ENCODE measurements at regions of chr1 and their contacts with region 1.

Region 1: DNA sequence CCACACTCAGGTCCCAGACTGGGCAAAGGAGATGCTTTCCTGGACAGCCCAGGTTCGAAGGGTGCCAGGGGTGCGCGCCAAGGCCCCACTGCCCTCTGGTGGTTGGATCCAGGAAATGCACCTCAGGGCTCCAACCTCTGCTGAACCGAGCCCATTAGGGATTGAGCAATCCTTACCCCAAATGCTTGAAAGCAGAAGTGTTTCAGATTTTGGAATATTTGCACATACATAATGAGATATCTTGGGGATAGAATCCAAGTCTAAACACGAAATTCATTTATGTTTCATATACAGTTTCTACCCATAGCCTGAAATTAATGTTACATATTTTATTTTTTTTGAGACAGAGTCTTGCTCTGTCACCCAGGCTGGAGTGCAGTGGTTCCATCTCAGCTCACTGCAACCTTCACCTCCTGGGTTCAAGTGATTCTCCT is 57.4 kb downstream of the SLC9A1 start:
- DNase-seq: peak; percentile 86
- H3K4me3 Mint-ChIP-seq: no peak overlapping the region
- H3K27ac Mint-ChIP-seq: peak overlapping the region; percentile 43
- H3K4me1 Mint-ChIP-seq: peaks cover 24% of the 10 kb centered on the region
- H3K27me3 Mint-ChIP-seq: no peaks in the 10 kb centered on the region
- CTCF ChIP-seq: peak; percentile 94

Region 2: GRCh38 chr1:26602378-26602959 is 495.0 kb before region 1 on chr1:
- CTCF ChIA-PET with region 1: no interaction called
- POLR2A ChIA-PET with region 1: no interaction called
- intact Hi-C with region 1: no loop called
- DNase-seq: peak; percentile 77
- H3K4me3 Mint-ChIP-seq: no peak overlapping the region
- H3K27ac Mint-ChIP-seq: no peak overlapping the region
- H3K4me1 Mint-ChIP-seq: no peaks in the 10 kb centered on the region
- H3K27me3 Mint-ChIP-seq: peaks cover 28% of the 10 kb centered on the region
- CTCF ChIP-seq: peak; percentile 77

Region 3: DNA sequence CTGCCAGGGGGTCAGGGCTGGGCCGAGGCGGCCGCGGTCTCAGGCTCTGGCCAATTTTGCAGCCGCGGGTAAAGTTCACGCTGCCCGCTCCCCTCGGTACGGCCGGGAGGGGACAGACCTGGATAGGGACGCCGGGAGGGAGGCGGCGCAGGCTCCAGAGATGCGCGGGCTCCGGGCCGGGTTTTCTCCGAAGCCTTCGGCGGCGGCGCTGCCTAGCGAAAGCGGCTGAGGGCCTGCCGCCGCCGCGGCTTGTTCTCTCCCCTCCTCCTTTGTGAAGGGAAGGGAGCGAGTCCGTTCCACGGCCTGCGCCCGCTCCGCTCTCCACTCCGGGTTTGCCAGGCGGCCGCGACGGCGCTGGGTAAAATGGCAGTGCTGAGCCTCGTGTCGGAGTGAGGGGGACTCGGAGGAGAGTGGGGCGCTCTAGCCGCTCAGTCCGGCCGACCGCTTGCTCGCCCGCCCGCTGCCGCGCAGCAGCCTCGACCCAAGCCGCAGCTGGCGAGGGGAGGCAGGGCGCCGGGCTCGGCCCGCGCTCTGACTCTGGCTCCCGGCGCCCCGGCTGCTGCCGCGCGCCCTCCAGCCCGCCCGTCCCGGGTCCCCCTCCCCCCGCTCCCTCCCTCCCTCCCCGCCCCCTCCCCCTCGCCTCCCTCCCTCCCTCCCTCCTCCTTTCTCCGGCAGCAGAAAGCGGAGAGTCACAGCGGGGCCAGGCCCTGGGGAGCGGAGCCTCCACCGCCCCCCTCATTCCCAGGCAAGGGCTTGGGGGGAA is 402.0 kb before region 1 on chr1 and contains the start of gene ARID1A:
- CTCF ChIA-PET with region 1: no interaction called
- POLR2A ChIA-PET with region 1: no interaction called
- intact Hi-C with region 1: no loop called
- DNase-seq: peak; percentile 96
- H3K4me3 Mint-ChIP-seq: no peak within 1 kb of the TSS
- H3K27ac Mint-ChIP-seq: peak within 1 kb of the TSS; percentile 71
- H3K4me1 Mint-ChIP-seq: peaks cover 13% of the 10 kb centered on the region
- H3K27me3 Mint-ChIP-seq: no peaks in the 10 kb centered on the region
- CTCF ChIP-seq: no peak
- total RNA-seq, gene ARID1A: 54.2 and 56.9 TPM in 2 replicates

Region 4: DNA sequence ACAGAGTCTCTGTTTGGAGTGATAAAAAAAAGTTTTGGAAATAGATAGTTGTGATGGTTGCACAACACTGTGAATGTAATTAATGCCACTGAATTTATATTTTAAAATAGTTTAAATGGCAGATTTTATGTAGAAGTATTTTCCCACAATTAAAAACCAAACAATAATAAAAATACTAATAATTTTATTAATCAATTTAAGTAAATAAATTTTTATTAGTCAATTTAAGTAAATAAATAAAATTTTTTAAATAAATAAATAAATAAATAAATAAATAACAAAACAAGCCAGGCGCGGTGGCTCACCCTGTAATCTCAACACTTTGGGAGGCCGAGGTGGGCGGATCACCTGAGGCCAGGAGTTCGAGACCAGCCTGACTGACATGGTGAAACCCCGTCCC is 132.3 kb before region 1 on chr1:
- CTCF ChIA-PET with region 1: interaction called, 41 read pairs
- POLR2A ChIA-PET with region 1: interaction called, 4 read pairs
- intact Hi-C with region 1: loop called (anchors 1 kb)
- DNase-seq: no peak
- H3K4me3 Mint-ChIP-seq: no peak overlapping the region
- H3K27ac Mint-ChIP-seq: no peak overlapping the region
- H3K4me1 Mint-ChIP-seq: peaks cover 37% of the 10 kb centered on the region
- H3K27me3 Mint-ChIP-seq: no peaks in the 10 kb centered on the region
- CTCF ChIP-seq: no peak

Region 5: DNA sequence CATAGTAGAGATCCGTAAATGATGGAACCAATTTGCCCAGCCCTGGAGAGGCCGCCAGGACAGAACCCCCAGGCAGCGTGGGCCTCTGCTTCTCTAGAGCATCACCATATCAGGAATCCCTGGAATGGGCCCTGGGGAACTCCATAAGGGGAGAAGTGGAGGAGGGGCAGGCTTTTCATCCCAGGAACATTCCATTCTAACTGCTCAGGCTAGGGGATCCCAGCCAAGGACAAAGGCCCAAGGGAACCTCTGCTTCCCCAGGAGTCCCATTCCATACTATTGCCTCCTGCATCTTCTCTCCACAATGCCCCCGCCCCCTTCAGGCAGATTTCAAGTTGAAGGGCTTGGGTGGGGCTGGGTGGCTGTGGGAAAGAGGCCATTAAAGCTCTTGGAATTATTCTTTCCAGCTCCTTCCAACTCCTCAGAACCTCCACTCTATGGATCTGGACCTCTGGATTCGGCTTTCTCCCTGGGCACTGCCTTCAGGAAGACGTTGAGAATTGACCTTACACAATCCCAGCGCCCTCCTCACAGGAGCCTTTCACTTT is 98.0 kb before region 1 on chr1:
- CTCF ChIA-PET with region 1: interaction called, 73 read pairs
- POLR2A ChIA-PET with region 1: interaction called, 32 read pairs
- intact Hi-C with region 1: loop called (anchors 1 kb)
- DNase-seq: peak; percentile 99
- H3K4me3 Mint-ChIP-seq: peak overlapping the region; percentile 80
- H3K27ac Mint-ChIP-seq: peak overlapping the region; percentile 92
- H3K4me1 Mint-ChIP-seq: peaks cover 45% of the 10 kb centered on the region
- H3K27me3 Mint-ChIP-seq: no peaks in the 10 kb centered on the region
- CTCF ChIP-seq: no peak

Region 6: GRCh38 chr1:27111626-27112573 is 14.4 kb after region 1 on chr1:
- CTCF ChIA-PET with region 1: interaction called, 22 read pairs
- POLR2A ChIA-PET with region 1: interaction called, 20 read pairs
- intact Hi-C with region 1: no loop called
- DNase-seq: peak; percentile 99
- H3K4me3 Mint-ChIP-seq: peak overlapping the region; percentile 46
- H3K27ac Mint-ChIP-seq: peak overlapping the region; percentile 74
- H3K4me1 Mint-ChIP-seq: peaks cover 31% of the 10 kb centered on the region
- H3K27me3 Mint-ChIP-seq: no peaks in the 10 kb centered on the region
- CTCF ChIP-seq: peak; percentile 20

Region 7: DNA sequence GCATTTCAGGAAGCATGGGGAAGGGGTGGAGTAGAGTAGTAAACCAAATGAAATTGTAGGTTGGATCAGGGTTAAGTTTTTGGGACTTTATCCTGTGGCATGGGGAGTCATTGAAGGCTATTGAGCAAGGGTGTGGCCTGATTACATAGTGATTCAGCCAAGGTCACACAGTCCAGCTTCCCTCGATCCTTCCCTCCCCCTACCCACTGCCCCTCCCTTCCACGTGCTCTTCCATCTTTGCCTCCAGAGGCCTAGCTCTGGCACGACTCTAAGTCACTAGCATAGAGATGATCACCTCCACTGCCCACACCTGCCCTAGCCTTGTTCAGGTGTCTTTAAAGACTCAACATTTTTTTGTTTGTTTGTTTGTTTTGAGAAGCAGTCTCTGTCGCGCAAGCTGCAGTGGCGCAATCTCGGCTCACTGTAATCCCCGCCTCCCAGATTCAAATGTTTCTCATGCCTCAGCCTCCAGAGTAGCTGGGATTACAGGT is 94.6 kb after region 1 on chr1:
- CTCF ChIA-PET with region 1: interaction called, 26 read pairs
- POLR2A ChIA-PET with region 1: interaction called, 3 read pairs
- intact Hi-C with region 1: no loop called
- DNase-seq: peak; percentile 58
- H3K4me3 Mint-ChIP-seq: peak overlapping the region; percentile 5
- H3K27ac Mint-ChIP-seq: peak overlapping the region; percentile 43
- H3K4me1 Mint-ChIP-seq: peaks cover 15% of the 10 kb centered on the region
- H3K27me3 Mint-ChIP-seq: no peaks in the 10 kb centered on the region
- CTCF ChIP-seq: no peak

Region 8: GRCh38 chr1:27392096-27392777 is 294.7 kb after region 1 on chr1 and contains the start of gene GPR3:
- CTCF ChIA-PET with region 1: interaction called, 3 read pairs
- POLR2A ChIA-PET with region 1: no interaction called
- intact Hi-C with region 1: loop called (anchors 5 kb)
- DNase-seq: peak; percentile 90
- H3K4me3 Mint-ChIP-seq: peak within 1 kb of the TSS; percentile 72
- H3K27ac Mint-ChIP-seq: peak within 1 kb of the TSS; percentile 53
- H3K4me1 Mint-ChIP-seq: peaks cover 18% of the 10 kb centered on the region
- H3K27me3 Mint-ChIP-seq: no peaks in the 10 kb centered on the region
- CTCF ChIP-seq: peak; percentile 53
- total RNA-seq, gene GPR3: 0.47 and 0.65 TPM in 2 replicates

Region 9: DNA sequence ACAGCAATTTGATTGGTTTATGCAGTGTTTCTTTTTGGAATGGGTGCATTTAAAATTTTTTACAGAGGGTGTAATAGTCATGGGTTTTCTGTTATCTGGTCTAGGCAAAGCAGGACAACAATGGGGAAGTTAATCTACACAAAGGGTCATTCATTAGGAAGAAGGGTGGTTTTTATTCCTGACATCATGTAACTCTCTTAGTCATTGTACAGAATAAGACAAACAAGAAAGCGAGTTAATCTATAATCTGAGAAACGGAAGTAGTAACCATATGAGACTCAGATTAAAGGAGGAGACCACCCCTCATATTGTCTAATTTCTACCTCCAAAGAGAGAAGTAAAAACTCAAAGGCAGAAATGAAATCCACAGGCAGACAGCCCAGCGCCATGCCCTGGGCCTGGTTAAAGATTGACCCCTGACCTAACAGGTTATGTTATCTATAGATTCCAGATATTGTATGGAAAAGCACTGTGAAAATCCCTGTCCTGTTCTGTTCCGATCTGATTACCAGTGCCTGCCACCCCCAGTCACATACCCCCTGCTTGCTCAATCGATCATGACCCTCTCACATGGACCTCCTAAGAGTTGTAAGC is 584.9 kb after region 1 on chr1:
- CTCF ChIA-PET with region 1: no interaction called
- POLR2A ChIA-PET with region 1: no interaction called
- intact Hi-C with region 1: no loop called
- DNase-seq: no peak
- H3K4me3 Mint-ChIP-seq: no peak overlapping the region
- H3K27ac Mint-ChIP-seq: no peak overlapping the region
- H3K4me1 Mint-ChIP-seq: no peaks in the 10 kb centered on the region
- H3K27me3 Mint-ChIP-seq: peaks cover 12% of the 10 kb centered on the region
- CTCF ChIP-seq: no peak

Region 10: GRCh38 chr1:28144203-28145135 is 1047.0 kb after region 1 on chr1:
- CTCF ChIA-PET with region 1: no interaction called
- POLR2A ChIA-PET with region 1: no interaction called
- intact Hi-C with region 1: no loop called
- DNase-seq: peak; percentile 86
- H3K4me3 Mint-ChIP-seq: no peak overlapping the region
- H3K27ac Mint-ChIP-seq: no peak overlapping the region
- H3K4me1 Mint-ChIP-seq: peaks cover 8% of the 10 kb centered on the region
- H3K27me3 Mint-ChIP-seq: no peaks in the 10 kb centered on the region
- CTCF ChIP-seq: no peak

Measured in MCF 10A (cell line).